ENCODE measurements at regions of chr20 and their contacts with region 1.

Region 1: GRCh38 chr20:631101-631500 is 21.0 kb upstream of the TCF15 start:
- DNase-seq: no peak
- H3K4me3 Mint-ChIP-seq: no peak overlapping the region
- H3K27ac Mint-ChIP-seq: no peak overlapping the region
- H3K4me1 Mint-ChIP-seq: no peaks in the 10 kb centered on the region
- H3K27me3 Mint-ChIP-seq: peaks cover 2% of the 10 kb centered on the region

Region 2: DNA sequence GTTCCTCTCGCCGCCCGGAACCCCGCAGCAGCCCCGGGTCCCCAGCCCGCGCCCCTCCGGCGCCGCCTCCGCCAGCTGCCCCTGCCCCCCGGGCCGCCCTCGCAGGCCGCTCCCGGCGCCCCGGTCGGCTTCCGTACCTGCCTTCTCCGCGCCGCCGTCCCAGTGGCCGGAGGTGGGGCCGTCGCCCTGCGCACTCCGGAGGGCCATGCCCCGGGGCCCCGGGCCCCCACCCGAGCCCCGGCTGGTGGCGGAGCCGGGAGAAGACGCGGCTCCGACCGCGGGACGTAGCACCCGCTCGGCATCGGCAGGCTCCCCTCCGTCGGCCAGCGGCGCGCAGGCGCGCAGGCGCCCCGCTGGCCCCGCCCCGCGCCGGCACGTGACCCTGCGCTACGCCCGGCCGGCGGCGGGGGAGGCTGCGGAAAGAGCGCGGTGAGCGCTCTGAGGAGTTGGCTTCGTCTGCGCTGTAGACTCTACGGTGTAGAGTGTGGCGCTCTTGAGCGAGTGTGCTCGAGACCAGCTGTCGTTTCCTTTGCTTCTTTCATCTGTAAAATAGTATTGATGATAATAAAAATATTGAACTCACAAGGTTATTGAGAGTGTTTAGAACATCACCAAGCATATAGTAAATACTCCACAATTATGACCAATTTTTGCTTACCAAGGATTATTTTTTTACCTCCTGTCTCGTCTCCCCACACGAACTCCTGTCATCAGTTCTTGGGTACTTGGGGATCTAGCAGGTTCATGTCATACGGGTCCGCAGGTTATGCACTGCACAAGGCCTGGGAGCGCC is 168.7 kb before region 1 on chr20 and contains the start of gene TBC1D20:
- CTCF ChIA-PET with region 1: no interaction called
- intact Hi-C with region 1: no loop called
- DNase-seq: peak; percentile 86
- H3K4me3 Mint-ChIP-seq: peak within 1 kb of the TSS; percentile 96
- H3K27ac Mint-ChIP-seq: peak within 1 kb of the TSS; percentile 86
- H3K4me1 Mint-ChIP-seq: peaks cover 41% of the 10 kb centered on the region
- H3K27me3 Mint-ChIP-seq: no peaks in the 10 kb centered on the region
- total RNA-seq, gene TBC1D20: 16.2 to 17.4 TPM

Region 3: DNA sequence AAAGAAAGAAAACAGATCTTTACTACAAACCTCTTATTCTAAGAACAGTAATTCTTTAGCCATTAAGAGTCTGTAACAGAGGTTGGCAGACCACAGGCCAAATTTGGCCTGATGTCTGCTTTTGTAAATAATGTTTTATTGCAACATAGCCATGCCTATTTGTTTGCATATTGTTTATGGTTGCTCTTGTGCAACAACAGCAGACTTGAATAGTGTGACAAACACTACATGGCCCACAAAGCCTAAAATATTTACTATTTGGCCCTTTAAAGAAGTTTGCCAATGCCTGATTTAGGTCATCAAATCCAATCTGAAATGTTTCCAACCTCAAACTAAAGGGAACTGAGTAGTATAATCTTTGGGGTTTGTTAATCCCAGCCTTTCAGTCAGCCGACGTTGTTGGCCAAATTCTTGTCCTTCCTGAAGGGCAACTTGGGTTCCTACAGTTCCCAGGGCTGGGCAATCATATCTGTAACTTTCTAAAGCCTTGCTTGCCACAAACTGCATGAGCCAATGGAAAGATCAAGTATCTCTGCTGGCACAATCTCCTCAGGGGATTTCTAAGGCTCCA is 134.9 kb before region 1 on chr20:
- CTCF ChIA-PET with region 1: no interaction called
- intact Hi-C with region 1: no loop called
- DNase-seq: no peak
- H3K4me3 Mint-ChIP-seq: no peak overlapping the region
- H3K27ac Mint-ChIP-seq: no peak overlapping the region
- H3K4me1 Mint-ChIP-seq: no peaks in the 10 kb centered on the region
- H3K27me3 Mint-ChIP-seq: no peaks in the 10 kb centered on the region

Region 4: GRCh38 chr20:645318-646106 is 14.4 kb after region 1 on chr20:
- CTCF ChIA-PET with region 1: interaction called, 21 read pairs
- intact Hi-C with region 1: no loop called
- DNase-seq: peak; percentile 76
- H3K4me3 Mint-ChIP-seq: no peak overlapping the region
- H3K27ac Mint-ChIP-seq: no peak overlapping the region
- H3K4me1 Mint-ChIP-seq: peaks cover 9% of the 10 kb centered on the region
- H3K27me3 Mint-ChIP-seq: peaks cover 21% of the 10 kb centered on the region